H1 (cell line): ENCODE measurements at regions of chr20 and their contacts with region 1.

Region 1: DNA sequence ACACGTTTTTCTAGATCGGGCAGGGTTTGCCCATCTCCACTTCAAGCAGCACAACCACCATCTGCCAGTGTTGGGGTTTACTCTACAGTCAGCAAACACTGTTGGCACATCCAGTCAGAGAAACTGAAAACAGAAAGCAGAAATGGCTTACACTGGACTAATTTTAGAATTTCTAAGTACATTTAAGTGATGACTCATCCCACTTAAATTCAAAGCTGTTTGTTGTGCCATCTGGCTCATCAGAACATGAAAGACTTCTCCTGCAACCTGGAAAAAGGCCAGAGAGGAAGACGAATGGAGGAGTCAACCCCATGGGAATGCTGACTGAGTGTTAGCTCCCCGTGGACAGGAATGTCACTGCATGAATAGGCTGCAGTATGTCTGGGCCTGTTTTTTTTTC is 21.8 kb downstream of the FAM209B start:
- DNase-seq: no peak
- H3K4me3 ChIP-seq: no peak overlapping the region
- H3K27ac ChIP-seq: no peak overlapping the region
- H3K4me1 ChIP-seq: peaks cover 0 to 2% (median 0%) of the 10 kb centered on the region in 4 experiments; a peak in 1 of 7 replicates
- H3K27me3 ChIP-seq: no peaks in the 10 kb centered on the region
- CTCF ChIP-seq: no peak
- EP300 ChIP-seq: no peak
- POLR2A ChIP-seq: no peak
- RAD21 ChIP-seq: no peak

Region 2: GRCh38 chr20:56540420-56540819 is 14.4 kb before region 1 on chr20:
- CTCF ChIA-PET with region 1: interaction called, 13 read pairs
- POLR2A ChIA-PET with region 1: interaction called, 3 read pairs
- DNase-seq: no peak
- H3K4me3 ChIP-seq: no peak overlapping the region
- H3K27ac ChIP-seq: no peak overlapping the region
- H3K4me1 ChIP-seq: no peaks in the 10 kb centered on the region
- H3K27me3 ChIP-seq: no peaks in the 10 kb centered on the region
- CTCF ChIP-seq: no peak
- EP300 ChIP-seq: no peak
- POLR2A ChIP-seq: no peak
- RAD21 ChIP-seq: no peak

Region 3: DNA sequence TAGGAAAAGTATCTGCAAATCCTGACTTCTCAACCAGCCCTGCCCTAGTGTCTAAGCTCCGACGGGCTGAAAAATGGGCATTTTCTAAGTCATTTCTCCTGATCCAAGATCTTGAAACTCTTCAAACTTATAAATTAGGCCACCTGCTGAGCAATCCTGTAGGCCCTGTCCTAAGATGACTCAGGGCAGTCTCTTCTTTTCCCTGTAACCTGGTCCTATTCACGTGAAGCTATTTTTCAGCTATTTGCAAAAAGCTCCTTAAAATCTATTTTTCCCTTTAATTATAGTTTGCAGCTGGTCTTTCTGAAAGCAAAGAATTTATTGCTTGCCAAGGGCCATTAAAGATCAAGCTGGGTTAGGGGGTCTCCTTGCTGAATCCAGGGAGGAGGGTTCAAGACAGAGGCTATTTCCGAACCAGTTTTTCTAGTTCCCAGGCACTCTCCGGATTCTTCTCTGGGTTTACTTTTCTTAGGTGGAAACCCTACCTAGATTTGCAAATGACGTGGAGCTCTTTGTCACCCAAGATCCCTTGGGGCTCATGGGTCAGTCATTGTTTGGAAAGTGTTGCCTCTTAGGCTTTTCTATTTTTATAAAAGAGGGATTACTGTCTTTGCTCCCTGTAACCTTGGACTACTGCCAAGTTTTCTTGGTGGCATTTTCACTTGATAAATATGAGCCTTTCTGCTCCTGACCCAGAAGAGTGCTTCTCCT is 11.6 kb after region 1 on chr20:
- CTCF ChIA-PET with region 1: interaction called, 15 read pairs
- POLR2A ChIA-PET with region 1: no interaction called
- DNase-seq: no peak
- H3K4me3 ChIP-seq: no peak overlapping the region
- H3K27ac ChIP-seq: no peak overlapping the region
- H3K4me1 ChIP-seq: no peaks in the 10 kb centered on the region; a peak in 1 of 7 replicates
- H3K27me3 ChIP-seq: no peaks in the 10 kb centered on the region
- CTCF ChIP-seq: no peak
- EP300 ChIP-seq: no peak
- POLR2A ChIP-seq: no peak
- RAD21 ChIP-seq: no peak

Region 4: GRCh38 chr20:56574531-56575142 is 19.8 kb after region 1 on chr20:
- CTCF ChIA-PET with region 1: interaction called, 95 read pairs
- POLR2A ChIA-PET with region 1: no interaction called
- DNase-seq: no peak
- H3K4me3 ChIP-seq: no peak overlapping the region
- H3K27ac ChIP-seq: no peak overlapping the region
- H3K4me1 ChIP-seq: no peaks in the 10 kb centered on the region; a peak in 1 of 7 replicates
- H3K27me3 ChIP-seq: no peaks in the 10 kb centered on the region; a peak in 1 of 7 replicates
- CTCF ChIP-seq: no peak
- EP300 ChIP-seq: no peak
- POLR2A ChIP-seq: no peak
- RAD21 ChIP-seq: no peak

Region 5: DNA sequence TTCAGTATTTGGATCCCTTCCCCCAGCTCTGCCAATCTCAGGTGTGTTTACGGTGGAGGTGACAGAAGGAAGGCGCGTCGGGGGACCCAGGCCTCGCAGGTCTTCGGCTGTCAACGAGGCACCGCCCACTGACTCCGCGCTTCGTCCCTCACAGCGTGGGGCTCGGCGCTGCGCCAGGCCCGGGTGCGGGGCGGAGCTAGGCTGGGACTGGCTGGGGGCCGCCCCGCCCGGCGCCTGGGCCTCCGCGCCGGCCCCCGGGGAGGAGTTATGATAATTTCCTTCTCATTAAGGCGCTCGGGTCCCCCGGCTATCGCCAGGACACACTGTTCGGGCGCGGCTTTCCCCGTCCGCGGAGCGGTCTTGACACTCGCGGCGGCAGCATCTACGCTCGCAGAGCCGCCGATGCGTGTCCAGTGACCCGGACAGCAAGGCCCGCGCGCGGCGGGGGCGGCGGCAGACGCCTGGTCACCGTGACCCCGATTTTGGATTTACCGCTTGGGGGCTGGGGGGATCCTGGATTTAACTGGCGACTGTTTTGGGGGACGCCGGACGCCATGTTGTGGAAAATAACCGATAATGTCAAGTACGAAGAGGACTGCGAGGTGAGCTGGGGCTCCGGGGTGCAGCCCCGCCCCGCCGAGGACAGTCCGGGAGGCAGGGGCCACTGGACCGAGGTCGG is 74.3 kb after region 1 on chr20 and contains the start of gene TFAP2C:
- CTCF ChIA-PET with region 1: interaction called, 12 read pairs
- POLR2A ChIA-PET with region 1: no interaction called
- DNase-seq: peak in 1 of 2 experiments; percentile 78
- H3K4me3 ChIP-seq: peak within 1 kb of the TSS; percentile 77 to 81 (median 79)
- H3K27ac ChIP-seq: no peak within 1 kb of the TSS
- H3K4me1 ChIP-seq: peaks cover 8 to 19% (median 18%) of the 10 kb centered on the region in 4 experiments
- H3K27me3 ChIP-seq: peaks cover 47 to 66% (median 56%) of the 10 kb centered on the region in 4 experiments
- CTCF ChIP-seq: 0 out of 4 replicates have a peak, but pooled peaks of 1 of the 3 experiments have one; percentile 0
- EP300 ChIP-seq: no peak
- POLR2A ChIP-seq: no peak
- RAD21 ChIP-seq: no peak
- total RNA-seq, gene TFAP2C: 5.6 and 5.8 TPM in 2 replicates

Region 6: DNA sequence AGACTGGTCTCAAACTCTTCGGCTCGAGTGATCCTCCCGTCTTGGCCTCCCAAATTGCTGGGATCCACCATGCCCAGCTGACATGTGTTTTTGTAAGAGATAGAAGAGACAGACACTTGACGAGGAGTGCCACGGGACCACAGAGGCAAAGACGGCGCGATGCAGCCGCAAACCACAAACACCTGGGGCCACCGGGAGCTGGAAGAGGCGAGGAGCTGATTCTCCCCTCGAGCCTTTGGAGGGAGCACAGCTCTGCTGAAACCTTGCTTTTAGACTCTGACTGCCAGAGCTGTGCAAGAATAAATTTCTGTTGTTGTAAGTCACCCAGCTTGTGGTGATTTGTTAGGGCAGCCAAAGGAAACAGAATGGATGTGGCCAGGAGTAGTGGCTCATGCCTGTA is 121.1 kb after region 1 on chr20:
- CTCF ChIA-PET with region 1: no interaction called
- POLR2A ChIA-PET with region 1: no interaction called
- DNase-seq: no peak
- H3K4me3 ChIP-seq: no peak overlapping the region
- H3K27ac ChIP-seq: no peak overlapping the region
- H3K4me1 ChIP-seq: peaks cover 0 to 15% (median 4%) of the 10 kb centered on the region in 4 experiments; a peak in 4 of 7 replicates
- H3K27me3 ChIP-seq: no peaks in the 10 kb centered on the region; a peak in 1 of 7 replicates
- CTCF ChIP-seq: no peak
- EP300 ChIP-seq: no peak
- POLR2A ChIP-seq: no peak
- RAD21 ChIP-seq: no peak